OCI-LY7 (cell line): ENCODE measurements at regions of chr13 and their contacts with region 1.

Region 1: GRCh38 chr13:66765559-66765958 is 464.6 kb downstream of the PCDH9 start:
- DNase-seq: no peak
- H3K4me3 ChIP-seq: no peak overlapping the region
- H3K27ac ChIP-seq: no peak overlapping the region
- H3K4me1 ChIP-seq: no peaks in the 10 kb centered on the region
- CTCF ChIP-seq: no peak

Region 2: GRCh38 chr13:66780814-66781213 is 15.3 kb after region 1 on chr13:
- CTCF ChIA-PET with region 1: no interaction called
- POLR2A ChIA-PET with region 1: interaction called, 16 read pairs
- intact Hi-C with region 1: no loop called
- DNase-seq: no peak
- H3K4me3 ChIP-seq: no peak overlapping the region
- H3K27ac ChIP-seq: no peak overlapping the region
- H3K4me1 ChIP-seq: no peaks in the 10 kb centered on the region
- CTCF ChIP-seq: no peak

Region 3: DNA sequence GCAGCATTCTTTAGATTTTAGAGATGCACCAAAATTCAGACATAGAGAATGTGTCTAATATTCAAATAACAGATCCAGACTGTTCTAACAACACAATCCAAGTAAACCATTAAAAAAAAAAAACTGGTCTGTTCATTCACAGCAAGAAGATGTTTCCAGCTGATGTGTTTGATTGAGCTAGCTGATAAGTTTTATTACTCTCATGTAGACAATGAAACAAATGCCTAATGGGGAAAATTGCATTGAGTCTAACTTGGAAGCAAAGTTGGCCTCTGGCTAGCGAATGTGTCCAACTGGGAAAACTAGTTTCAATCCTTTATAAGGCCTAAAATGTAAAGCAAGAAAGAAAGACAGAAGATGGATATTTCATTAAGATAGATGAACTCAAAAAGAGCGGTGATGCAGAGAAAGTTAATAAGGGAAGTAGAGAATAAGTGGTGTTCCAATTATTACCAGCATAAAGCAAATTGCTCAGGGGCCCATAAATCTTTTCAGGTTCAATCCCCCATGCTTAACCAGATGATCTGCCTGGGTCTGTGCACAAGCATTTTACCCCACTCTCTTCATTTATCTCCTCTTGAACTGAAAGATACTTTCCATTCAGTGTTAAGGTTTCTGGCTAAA is 410.4 kb after region 1 on chr13:
- CTCF ChIA-PET with region 1: no interaction called
- POLR2A ChIA-PET with region 1: no interaction called
- intact Hi-C with region 1: no loop called
- DNase-seq: no peak
- H3K4me3 ChIP-seq: no peak overlapping the region
- H3K27ac ChIP-seq: no peak overlapping the region
- H3K4me1 ChIP-seq: no peaks in the 10 kb centered on the region
- CTCF ChIP-seq: no peak